Spleen (tissue), 13 donors: ENCODE measurements at regions of chr13 and their contacts with region 1.

Region 1: GRCh38 chr13:51435002-51435578 is 17.7 kb downstream of the INTS6 start:
- DNase-seq: no peak
- H3K4me3 ChIP-seq: no peak overlapping the region
- H3K27ac ChIP-seq: no peak overlapping the region
- H3K4me1 ChIP-seq: peaks cover 0 to 17% (median 1%) of the 10 kb centered on the region in 6 donors
- H3K27me3 ChIP-seq: no peaks in the 10 kb centered on the region
- CTCF ChIP-seq: peak in 9 of 11 experiments; percentile 16 to 53 (median 42)
- POLR2A ChIP-seq: no peak

Region 2: GRCh38 chr13:51330791-51331190 is 104.3 kb before region 1 on chr13:
- intact Hi-C with region 1: no loop called
- DNase-seq: no peak
- H3K4me3 ChIP-seq: no peak overlapping the region
- H3K27ac ChIP-seq: no peak overlapping the region
- H3K4me1 ChIP-seq: peaks cover 0 to 11% (median 1%) of the 10 kb centered on the region in 6 donors
- H3K27me3 ChIP-seq: no peaks in the 10 kb centered on the region
- CTCF ChIP-seq: no peak
- POLR2A ChIP-seq: no peak

Region 3: GRCh38 chr13:51542346-51543242 is 107.5 kb after region 1 on chr13:
- intact Hi-C with region 1: no loop called
- DNase-seq: no peak
- H3K4me3 ChIP-seq: no peak overlapping the region
- H3K27ac ChIP-seq: no peak overlapping the region
- H3K4me1 ChIP-seq: no peaks in the 10 kb centered on the region
- H3K27me3 ChIP-seq: no peaks in the 10 kb centered on the region
- CTCF ChIP-seq: no peak
- POLR2A ChIP-seq: no peak

Region 4: GRCh38 chr13:51797664-51798488 is 362.8 kb after region 1 on chr13:
- intact Hi-C with region 1: loop called (anchors 10 kb)
- DNase-seq: no peak
- H3K4me3 ChIP-seq: no peak overlapping the region
- H3K27ac ChIP-seq: no peak overlapping the region
- H3K4me1 ChIP-seq: peaks cover 12 to 55% (median 31%) of the 10 kb centered on the region in 6 donors
- H3K27me3 ChIP-seq: no peaks in the 10 kb centered on the region
- CTCF ChIP-seq: peak in 10 of 11 experiments; percentile 27 to 62 (median 46)
- POLR2A ChIP-seq: no peak